Naive thymus-derived CD4-positive, alpha-beta T cell (primary cell): ENCODE measurements at regions of chr4 and their contacts with region 1.

Region 1: DNA sequence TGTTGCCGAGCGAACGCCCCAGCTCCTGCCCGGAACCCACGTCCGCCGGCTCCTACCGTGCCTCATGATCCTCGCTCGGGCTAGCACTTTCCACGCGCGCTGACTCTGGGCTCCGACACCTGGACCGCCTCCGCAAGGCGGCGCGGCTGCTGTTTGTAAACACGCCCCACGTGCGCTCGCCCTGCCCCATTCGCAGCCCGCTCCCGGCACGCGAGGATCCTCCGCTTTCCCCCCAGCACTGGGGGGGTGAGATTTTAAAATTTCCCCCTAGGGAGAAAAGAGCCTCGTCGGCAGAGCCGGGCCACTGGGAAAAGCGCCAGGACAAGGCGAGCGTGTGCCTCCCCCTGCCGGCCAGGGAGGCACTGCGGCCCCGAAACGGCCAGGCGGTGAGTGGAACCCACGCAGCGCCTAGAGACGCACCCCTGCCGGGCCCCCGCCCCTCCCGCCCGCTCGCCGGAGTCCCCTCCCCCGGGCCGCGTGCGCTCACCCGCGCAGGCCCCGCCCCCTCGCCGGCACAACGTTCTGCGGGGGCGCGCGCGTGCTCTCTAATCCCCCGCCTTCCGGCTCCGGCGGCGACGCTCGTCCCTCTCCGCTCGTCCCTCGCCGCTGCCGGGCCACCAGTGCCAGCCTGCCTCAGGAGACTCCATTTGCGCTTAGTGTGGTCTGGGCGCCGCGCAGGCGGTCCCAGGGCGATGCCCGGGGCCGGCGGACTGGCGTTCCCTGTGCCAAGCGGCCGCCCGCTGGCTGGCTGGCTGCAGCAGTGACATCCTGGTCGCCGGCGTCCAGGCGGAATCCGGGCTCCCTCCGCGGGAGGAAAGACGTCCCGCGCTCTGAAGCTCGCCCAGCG is at the start of gene TIGD2:
- DNase-seq: peak; percentile 81 to 90 (median 87)
- ATAC-seq: peak; percentile 97
- H3K4me3 ChIP-seq: peak within 1 kb of the TSS; percentile 80
- H3K4me3 Mint-ChIP-seq: peak within 1 kb of the TSS; percentile 84 to 93 (median 90)
- H3K27ac ChIP-seq: peak within 1 kb of the TSS; percentile 81
- H3K27ac Mint-ChIP-seq: peak within 1 kb of the TSS; percentile 80 to 94 (median 89)
- H3K4me1 ChIP-seq: peaks cover 10 to 15% of the 10 kb centered on the region in 2 donors
- H3K4me1 Mint-ChIP-seq: peaks cover 20 to 28% (median 24%) of the 10 kb centered on the region in 7 donors
- H3K27me3 ChIP-seq: no peaks in the 10 kb centered on the region
- H3K27me3 Mint-ChIP-seq: peaks cover 0 to 25% (median 0%) of the 10 kb centered on the region in 5 donors
- total RNA-seq, gene TIGD2: 3.0 to 7.9 (median 5.2) TPM

Region 2: DNA sequence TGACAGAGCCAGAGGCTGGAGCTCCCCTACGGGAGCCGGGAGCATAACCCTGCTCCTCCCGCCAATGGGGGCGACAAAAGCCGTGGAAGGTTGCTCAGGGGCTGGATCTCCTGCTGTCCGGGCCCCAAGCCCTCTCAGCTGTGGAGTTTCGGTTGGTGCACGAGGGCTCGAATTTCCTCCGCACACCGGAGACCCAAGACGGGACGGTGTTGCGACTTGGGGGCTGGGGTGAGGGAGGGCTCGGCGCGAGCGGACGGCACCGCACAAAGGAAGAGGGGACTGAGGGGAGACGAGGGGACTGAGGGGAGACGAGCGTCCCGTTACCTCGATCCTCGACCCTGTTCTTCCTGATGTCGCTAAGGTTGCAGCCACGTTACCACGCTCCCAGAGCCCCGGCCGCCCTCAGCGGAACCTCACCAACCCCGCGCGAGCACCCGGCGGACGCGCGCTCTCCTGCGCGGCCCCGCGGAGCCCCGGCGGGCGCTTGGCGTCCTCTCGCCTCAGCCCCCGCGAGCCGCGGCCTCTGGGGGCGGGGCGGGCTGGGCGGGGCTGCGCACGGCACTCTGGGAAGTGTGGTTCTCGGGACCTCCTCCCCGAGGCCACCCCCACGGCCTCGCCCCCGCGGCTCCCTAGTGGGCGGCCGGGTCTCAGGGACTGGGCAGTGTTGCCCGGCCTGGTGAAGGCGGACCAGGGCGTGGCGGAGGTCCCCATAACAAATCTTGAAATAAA is 1891.0 kb before region 1 on chr4 and contains the start of gene KLHL8:
- CTCF ChIA-PET with region 1: no interaction called
- POLR2A ChIA-PET with region 1: no interaction called
- intact Hi-C with region 1: loop called (anchors 2 kb)
- DNase-seq: peak; percentile 82 to 94 (median 89)
- ATAC-seq: peak; percentile 97
- H3K4me3 ChIP-seq: peak within 1 kb of the TSS; percentile 97
- H3K4me3 Mint-ChIP-seq: peak within 1 kb of the TSS; percentile 73 to 99 (median 94)
- H3K27ac ChIP-seq: peak within 1 kb of the TSS; percentile 92
- H3K27ac Mint-ChIP-seq: peak within 1 kb of the TSS; percentile 71 to 95 (median 91)
- H3K4me1 ChIP-seq: peaks cover 0 to 8% of the 10 kb centered on the region in 2 donors
- H3K4me1 Mint-ChIP-seq: peaks cover 6 to 32% (median 17%) of the 10 kb centered on the region in 7 donors
- H3K27me3 ChIP-seq: no peaks in the 10 kb centered on the region
- H3K27me3 Mint-ChIP-seq: peaks cover 0 to 14% (median 0%) of the 10 kb centered on the region in 5 donors
- total RNA-seq, gene KLHL8: 10.9 to 15.7 (median 11.6) TPM

Region 3: GRCh38 chr4:88264336-88264735 is 846.9 kb before region 1 on chr4:
- CTCF ChIA-PET with region 1: no interaction called
- POLR2A ChIA-PET with region 1: interaction called, 13 read pairs
- intact Hi-C with region 1: no loop called
- DNase-seq: no peak
- ATAC-seq: no peak
- H3K4me3 ChIP-seq: no peak overlapping the region
- H3K4me3 Mint-ChIP-seq: no peak overlapping the region
- H3K27ac ChIP-seq: no peak overlapping the region
- H3K27ac Mint-ChIP-seq: no peak overlapping the region
- H3K4me1 ChIP-seq: no peaks in the 10 kb centered on the region
- H3K4me1 Mint-ChIP-seq: peaks cover 0 to 4% (median 0%) of the 10 kb centered on the region in 7 donors
- H3K27me3 ChIP-seq: no peaks in the 10 kb centered on the region
- H3K27me3 Mint-ChIP-seq: no peaks in the 10 kb centered on the region

Region 4: DNA sequence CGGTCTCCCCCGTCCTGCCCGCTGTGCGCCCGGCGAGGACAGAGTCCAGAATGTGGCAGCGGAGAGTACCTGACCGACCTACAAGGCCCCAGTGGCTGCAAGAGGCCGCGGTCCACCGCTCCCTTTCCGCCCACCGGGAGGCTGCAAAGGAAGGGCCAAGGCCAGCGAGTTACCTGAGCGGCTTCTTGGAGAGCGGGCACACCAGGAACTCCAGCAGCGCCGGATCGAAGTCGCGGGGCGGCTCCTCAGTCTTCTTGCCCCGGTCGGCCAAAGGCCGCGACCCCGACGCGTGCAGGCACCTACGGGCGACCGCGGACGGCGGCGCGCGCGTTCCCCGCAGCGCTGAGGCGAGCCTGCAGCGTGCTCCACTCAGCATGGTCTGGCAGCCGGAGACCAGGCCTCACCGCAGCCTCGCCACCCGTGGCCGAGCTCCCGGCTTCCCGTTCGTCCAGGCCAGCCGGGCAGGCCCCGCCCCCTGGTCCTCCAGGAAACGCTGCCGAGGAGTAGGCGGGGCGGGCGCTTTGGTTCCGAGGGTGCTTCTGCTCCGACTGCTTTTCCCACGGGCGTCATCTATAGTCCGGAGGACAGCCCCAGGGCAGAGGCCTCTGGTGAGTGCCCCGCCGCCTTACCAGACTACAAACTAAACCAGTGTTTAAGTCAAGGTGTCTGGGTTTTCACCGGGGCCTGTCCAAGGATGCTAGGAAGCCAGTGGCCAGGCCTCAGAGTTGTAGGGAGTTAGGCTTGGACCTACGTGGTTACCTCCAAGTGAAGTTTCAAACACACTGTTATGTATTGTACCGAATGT is 587.7 kb before region 1 on chr4 and contains the start of gene PYURF:
- CTCF ChIA-PET with region 1: no interaction called
- POLR2A ChIA-PET with region 1: no interaction called
- intact Hi-C with region 1: loop called (anchors 1 to 5 kb)
- DNase-seq: peak; percentile 46 to 85 (median 50)
- ATAC-seq: peak; percentile 85
- H3K4me3 ChIP-seq: peak within 1 kb of the TSS; percentile 75
- H3K4me3 Mint-ChIP-seq: peak within 1 kb of the TSS; percentile 88 to 98 (median 92)
- H3K27ac ChIP-seq: peak within 1 kb of the TSS; percentile 79
- H3K27ac Mint-ChIP-seq: peak within 1 kb of the TSS; percentile 88 to 97 (median 93)
- H3K4me1 ChIP-seq: peaks cover 10 to 19% of the 10 kb centered on the region in 2 donors
- H3K4me1 Mint-ChIP-seq: peaks cover 0 to 56% (median 48%) of the 10 kb centered on the region in 7 donors
- H3K27me3 ChIP-seq: no peaks in the 10 kb centered on the region
- H3K27me3 Mint-ChIP-seq: no peaks in the 10 kb centered on the region
- total RNA-seq, gene PYURF: 33.0 to 57.7 (median 47.4) TPM

Region 5: DNA sequence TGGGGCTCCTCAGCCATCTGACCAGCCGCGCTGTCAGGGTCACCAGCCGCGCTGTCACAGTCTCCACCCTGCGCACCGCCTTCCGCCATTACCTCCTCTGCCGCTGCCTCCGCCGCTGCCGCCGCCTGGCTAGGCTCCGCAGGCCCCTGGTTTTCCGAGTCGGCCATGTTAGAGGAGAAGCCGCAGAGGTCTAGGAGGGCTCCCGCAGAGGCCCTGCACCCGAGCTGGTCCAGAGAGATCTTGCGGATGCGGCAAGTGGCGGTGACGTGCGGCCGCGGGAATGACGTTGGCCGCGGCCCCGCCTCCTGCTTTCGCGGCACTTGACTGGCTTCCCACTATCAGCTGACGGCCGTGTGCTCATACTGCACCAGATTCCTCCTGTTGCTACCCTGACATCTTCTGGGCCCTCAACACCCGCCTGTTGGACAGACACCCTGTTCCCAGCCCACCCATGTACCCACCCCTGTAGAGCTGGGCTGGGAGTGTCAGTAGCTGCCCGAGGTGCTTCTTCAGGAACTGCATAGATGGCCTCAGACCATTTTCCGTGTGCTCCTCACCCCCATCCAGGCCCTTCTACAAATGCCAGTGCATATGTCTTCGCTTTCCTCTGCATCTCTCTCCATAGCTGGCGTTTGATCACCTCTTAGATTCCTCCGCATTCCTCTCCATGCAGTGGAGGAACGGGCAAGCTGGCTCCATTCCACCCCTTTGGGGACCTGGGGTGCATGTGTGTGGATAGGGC is 413.4 kb before region 1 on chr4 and contains the start of gene NAP1L5:
- CTCF ChIA-PET with region 1: no interaction called
- POLR2A ChIA-PET with region 1: no interaction called
- intact Hi-C with region 1: loop called in 1 of 2 experiments (anchors 5 kb)
- DNase-seq: peak; percentile 57 to 88 (median 81)
- ATAC-seq: peak; percentile 95
- H3K4me3 ChIP-seq: peak within 1 kb of the TSS; percentile 68
- H3K4me3 Mint-ChIP-seq: peak within 1 kb of the TSS; percentile 82 to 92 (median 88)
- H3K27ac ChIP-seq: peak within 1 kb of the TSS; percentile 79
- H3K27ac Mint-ChIP-seq: peak within 1 kb of the TSS; percentile 79 to 96 (median 94)
- H3K4me1 ChIP-seq: peaks cover 0 to 13% of the 10 kb centered on the region in 2 donors
- H3K4me1 Mint-ChIP-seq: peaks cover 5 to 35% (median 22%) of the 10 kb centered on the region in 7 donors
- H3K27me3 ChIP-seq: no peaks in the 10 kb centered on the region
- H3K27me3 Mint-ChIP-seq: no peaks in the 10 kb centered on the region
- total RNA-seq, gene NAP1L5: 1.4 to 11.7 (median 4.5) TPM

Region 6: GRCh38 chr4:89158884-89159503 is 47.8 kb after region 1 on chr4:
- CTCF ChIA-PET with region 1: interaction called, 3 read pairs
- POLR2A ChIA-PET with region 1: no interaction called
- intact Hi-C with region 1: loop called in 1 of 2 experiments (anchors 1 kb)
- DNase-seq: peak in 5 of 9 donors; percentile 5 to 30 (median 21)
- ATAC-seq: peak; percentile 82
- H3K4me3 ChIP-seq: no peak overlapping the region
- H3K4me3 Mint-ChIP-seq: no peak overlapping the region
- H3K27ac ChIP-seq: no peak overlapping the region
- H3K27ac Mint-ChIP-seq: no peak overlapping the region
- H3K4me1 ChIP-seq: no peaks in the 10 kb centered on the region
- H3K4me1 Mint-ChIP-seq: peaks cover 0 to 5% (median 0%) of the 10 kb centered on the region in 7 donors
- H3K27me3 ChIP-seq: no peaks in the 10 kb centered on the region
- H3K27me3 Mint-ChIP-seq: peaks cover 3 to 20% (median 5%) of the 10 kb centered on the region in 5 donors